ENCODE measurements at regions of chrX and their contacts with region 1.

Region 1: DNA sequence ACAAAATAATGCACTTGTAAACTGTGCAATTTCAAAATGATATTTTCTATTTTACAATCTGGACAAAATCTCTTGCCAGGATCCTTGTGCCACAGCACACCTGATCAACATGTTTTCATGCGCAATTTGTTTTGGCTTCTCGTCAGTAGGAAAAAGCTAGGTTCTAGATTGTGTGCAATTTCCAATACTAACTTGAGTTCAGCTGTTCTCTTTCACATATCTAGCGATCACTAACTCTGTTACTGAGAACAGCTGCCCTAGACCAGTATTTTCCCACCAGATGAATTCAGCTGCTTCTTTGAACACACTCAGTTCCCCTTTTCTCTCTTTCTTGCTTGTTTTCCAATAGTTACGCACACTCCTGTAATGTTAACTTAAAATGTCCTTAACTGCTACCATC is 131.2 kb downstream of the MAGEB5 start:
- DNase-seq: no peak
- H3K4me3 ChIP-seq: no peak overlapping the region
- H3K27ac ChIP-seq: no peak overlapping the region
- H3K4me1 ChIP-seq: no peaks in the 10 kb centered on the region
- H3K27me3 ChIP-seq: no peaks in the 10 kb centered on the region
- CTCF ChIP-seq: no peak

Region 2: GRCh38 chrX:24619647-24620046 is 1727.5 kb before region 1 on chrX:
- CTCF ChIA-PET with region 1: no interaction called
- POLR2A ChIA-PET with region 1: interaction called, 11 read pairs
- intact Hi-C with region 1: no loop called
- DNase-seq: peak; percentile 24
- H3K4me3 ChIP-seq: no peak overlapping the region
- H3K27ac ChIP-seq: no peak overlapping the region
- H3K4me1 ChIP-seq: no peaks in the 10 kb centered on the region
- H3K27me3 ChIP-seq: no peaks in the 10 kb centered on the region
- CTCF ChIP-seq: no peak

Region 3: DNA sequence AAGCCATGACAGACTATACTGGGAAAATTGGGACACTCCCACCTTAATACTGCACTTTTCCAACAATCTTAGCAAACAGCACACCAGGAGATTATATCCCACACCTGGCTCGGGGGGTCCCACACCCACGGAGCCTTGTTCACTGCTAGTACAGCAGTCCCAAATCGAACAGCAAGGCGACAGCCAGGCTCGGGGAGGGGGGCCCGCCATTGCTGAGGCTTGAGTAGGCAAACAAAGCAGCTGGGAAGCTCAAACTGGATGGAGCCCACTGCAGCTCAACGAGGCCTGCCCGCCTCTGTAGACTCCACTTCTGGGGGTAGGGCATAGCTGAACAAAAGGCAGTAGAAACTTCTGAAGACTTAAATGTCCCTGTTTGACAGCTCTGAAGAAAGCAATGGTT is 12.9 kb before region 1 on chrX:
- CTCF ChIA-PET with region 1: no interaction called
- POLR2A ChIA-PET with region 1: no interaction called
- intact Hi-C with region 1: no loop called
- DNase-seq: no peak
- H3K4me3 ChIP-seq: no peak overlapping the region
- H3K27ac ChIP-seq: no peak overlapping the region
- H3K4me1 ChIP-seq: no peaks in the 10 kb centered on the region
- H3K27me3 ChIP-seq: no peaks in the 10 kb centered on the region
- CTCF ChIP-seq: no peak

Measured in A673 (cell line).